Activated naive CD8-positive, alpha-beta T cell treated with anti-CD3 and anti-CD28 coated beads, Interleukin-2, amount 10 ng/mL, durations not matched to agents 7 days and 5 days (primary cell): ENCODE measurements at regions of chr13 and their contacts with region 1.

Region 1: GRCh38 chr13:51814825-51815650 is 11.1 kb upstream of the DHRS12 start:
- DNase-seq: peak; percentile 70
- ATAC-seq: peak; percentile 87
- H3K4me3 Mint-ChIP-seq: peak overlapping the region; percentile 57
- H3K27ac Mint-ChIP-seq: peak overlapping the region; percentile 86
- H3K4me1 Mint-ChIP-seq: peaks cover 37% of the 10 kb centered on the region
- H3K27me3 Mint-ChIP-seq: no peaks in the 10 kb centered on the region

Region 2: DNA sequence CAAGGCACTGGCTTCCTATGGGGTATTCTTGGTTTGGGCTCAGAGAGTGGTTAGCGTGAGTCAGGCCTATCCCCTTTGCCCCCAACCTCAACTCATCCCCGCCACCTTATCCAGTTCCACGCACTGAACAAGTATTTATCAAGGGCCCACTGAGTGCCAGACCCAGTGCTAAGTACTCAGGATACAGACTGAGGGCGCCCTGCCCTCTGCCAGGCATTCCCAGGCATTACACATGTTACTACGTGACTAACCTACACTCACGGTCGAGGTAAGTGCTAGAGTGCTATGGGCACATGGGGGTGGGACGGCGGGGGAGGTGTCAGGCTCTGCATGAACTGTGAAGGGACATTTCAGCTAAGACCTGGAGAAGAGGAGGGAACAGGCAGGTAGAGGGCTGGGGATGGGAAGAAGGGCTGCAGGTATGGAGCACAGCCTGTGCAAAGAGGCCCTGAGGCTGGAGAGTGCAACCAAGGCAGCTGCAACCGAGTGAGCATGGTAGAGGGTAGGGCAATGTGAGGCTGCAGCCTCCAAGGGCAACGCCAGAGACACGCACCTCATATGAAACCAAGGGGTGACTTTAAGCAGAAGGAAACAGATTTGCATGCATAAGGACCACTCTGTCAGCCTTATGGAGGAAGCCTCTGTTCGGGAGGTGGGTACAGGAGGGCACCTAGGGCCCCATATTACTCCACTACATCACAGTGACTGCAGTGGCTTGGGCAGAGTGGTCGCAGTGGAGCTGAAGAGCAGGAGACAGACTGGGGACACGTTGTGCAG is 33.6 kb before region 1 on chr13:
- POLR2A ChIA-PET with region 1: no interaction called
- DNase-seq: no peak
- ATAC-seq: peak; percentile 60
- H3K4me3 Mint-ChIP-seq: no peak overlapping the region
- H3K27ac Mint-ChIP-seq: peak overlapping the region; percentile 10
- H3K4me1 Mint-ChIP-seq: peaks cover 2% of the 10 kb centered on the region
- H3K27me3 Mint-ChIP-seq: no peaks in the 10 kb centered on the region

Region 3: DNA sequence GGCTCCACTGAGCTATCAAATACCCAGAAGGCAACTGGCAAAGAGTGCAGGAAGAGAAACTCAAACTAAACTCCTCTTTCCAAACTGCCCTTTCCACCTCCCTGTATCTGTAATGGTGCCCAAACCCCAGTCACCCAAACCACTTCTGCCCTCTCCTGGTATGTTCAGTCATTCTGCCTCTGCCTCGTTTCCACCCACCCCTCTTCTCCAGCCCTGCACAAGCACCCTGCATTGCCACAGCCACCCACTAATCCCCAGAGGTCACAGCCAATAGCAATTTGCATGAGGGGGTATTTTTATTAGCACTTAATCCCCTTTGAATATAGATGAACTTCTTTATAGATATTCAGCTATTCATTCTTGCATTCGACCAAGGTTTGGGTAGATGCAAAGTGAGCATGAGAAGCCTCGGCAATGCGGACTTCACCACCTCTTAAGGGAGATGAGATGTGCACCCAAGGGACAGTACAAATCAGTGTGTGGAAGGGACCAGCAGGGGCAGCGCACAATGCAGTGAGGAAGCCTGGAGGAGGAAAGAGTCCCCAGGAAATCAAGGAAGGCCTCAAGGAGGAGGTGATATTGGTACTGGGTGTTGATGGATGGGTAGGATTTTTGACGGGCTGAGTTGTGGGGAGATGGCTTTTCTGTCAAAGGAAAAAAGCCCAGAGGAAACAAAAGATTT is 17.6 kb after region 1 on chr13:
- POLR2A ChIA-PET with region 1: interaction called, 20 read pairs
- DNase-seq: no peak
- ATAC-seq: peak; percentile 95
- H3K4me3 Mint-ChIP-seq: peak overlapping the region; percentile 9
- H3K27ac Mint-ChIP-seq: peak overlapping the region; percentile 17
- H3K4me1 Mint-ChIP-seq: peaks cover 51% of the 10 kb centered on the region
- H3K27me3 Mint-ChIP-seq: no peaks in the 10 kb centered on the region